Posterior vena cava (tissue), 2 donors: ENCODE measurements at regions of chr18 and their contacts with region 1.

Region 1: DNA sequence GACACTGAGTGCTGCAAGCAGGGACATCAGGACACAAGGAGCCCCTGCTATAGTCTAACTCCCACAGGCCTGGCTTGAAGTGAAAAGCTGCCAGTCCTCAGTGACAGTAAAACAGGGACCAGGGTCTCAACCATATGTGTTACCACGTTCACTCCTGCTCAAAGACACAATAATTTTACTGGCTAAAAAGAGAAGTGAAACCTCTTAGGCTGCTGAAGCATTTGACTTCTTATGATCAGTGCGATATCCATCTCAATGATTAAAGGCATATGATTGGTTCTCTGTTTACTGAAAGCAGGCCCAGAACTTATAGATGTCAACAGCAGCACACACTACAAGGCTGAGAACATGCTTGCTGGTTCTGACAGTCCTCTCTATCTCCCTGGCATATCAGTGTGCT is 129.8 kb upstream of the LMAN1 start:
- DNase-seq: no peak

Region 2: DNA sequence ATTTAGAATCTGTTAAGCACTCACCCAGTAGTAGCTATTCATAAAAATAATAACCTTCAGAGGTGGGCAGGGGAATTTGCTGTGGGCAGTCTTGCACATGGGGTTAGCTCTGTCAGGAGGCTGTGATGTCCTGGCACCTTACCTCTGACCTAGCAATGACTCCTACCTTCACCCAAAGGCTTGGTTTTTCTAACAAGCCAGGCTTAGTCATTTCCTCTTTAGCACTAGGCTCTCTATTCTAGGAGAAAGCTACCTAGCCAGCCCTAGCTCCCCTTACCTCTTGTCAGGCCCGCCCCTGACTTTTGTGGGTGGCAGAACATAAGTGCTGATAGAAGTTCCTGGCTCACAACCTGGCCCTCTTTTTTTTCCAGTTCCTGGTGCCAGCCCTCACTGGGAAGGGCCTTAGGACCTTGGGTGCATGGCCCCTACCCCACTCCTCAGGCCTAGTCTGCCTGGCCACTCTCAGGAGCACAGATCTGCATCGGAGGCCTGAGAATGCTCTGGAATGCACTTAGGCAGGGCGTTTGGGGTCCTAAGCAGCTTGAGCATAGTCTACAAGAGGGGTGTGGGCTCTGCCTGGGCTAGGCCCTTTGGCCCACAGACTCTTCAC is 188.1 kb before region 1 on chr18:
- intact Hi-C with region 1: no loop called
- DNase-seq: no peak

Region 3: DNA sequence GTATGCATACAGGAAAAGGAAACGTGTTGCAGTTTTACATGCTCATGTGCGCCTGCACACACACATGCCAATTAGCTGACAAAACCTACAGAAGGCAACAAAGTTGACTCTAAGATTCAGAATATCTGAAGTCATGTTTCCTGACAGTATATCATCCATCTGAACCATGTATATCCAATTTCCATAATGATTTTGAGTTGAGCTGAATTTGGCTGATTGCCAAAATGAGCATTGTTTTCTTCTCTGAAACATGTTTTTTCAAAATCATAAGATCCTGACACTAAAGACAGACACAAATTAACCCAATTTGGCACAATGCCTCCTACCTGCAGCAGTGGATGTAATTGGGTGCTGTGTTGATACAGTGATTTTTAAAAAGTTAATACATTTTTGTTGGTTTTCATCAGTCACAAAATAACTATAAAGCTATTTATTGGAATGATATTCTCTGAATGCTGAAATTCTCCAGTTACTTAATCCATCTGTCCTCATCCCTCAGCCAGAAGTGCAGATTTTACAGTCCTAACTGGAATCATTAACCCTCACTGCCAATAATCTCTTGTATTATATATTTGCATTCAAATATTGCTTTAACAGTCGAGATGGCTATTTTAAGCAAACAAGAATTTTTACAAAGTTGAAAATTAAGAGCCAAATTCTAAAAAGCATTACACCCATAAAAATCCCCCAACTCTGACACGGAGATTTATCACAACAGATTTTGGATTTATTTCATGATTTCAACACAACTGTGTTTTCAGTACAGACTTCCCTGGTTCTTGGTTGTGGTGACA is 31.9 kb after region 1 on chr18:
- intact Hi-C with region 1: loop called in 1 of 2 experiments (anchors 1 kb)
- DNase-seq: no peak

Region 4: GRCh38 chr18:59528861-59529260 is 40.0 kb after region 1 on chr18:
- intact Hi-C with region 1: loop called in 1 of 2 experiments (anchors 1 kb)
- DNase-seq: no peak

Region 5: GRCh38 chr18:59606193-59607077 is 117.5 kb after region 1 on chr18:
- intact Hi-C with region 1: no loop called
- DNase-seq: no peak

Region 6: DNA sequence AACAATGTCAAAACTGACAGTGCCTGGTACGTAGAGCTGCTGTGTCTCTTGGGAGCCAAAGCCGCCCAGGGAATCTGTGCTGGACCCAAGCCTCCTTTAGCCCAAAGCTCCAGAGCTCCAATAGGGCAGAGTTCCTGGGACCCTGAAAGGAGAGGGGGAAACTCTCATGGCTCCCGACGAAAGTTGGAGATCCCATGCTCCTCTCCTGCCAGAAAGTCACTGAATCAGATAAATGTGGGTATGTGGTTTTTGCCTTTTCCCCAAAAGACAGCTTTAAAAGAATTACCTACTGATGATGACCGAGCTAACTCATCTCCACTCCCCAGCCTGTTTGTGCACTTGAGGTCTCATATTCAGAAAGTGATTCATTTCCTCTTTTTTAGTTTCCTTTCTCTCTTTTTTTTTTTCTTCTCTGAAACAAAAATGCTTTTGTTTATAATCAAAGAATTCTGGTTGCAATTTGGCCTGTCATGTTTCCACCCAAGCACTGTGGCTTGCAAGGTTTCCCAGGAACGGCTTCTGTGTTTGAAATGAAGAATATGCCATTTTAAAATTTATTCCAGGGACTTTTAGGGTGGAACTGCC is 396.8 kb after region 1 on chr18:
- intact Hi-C with region 1: no loop called
- DNase-seq: no peak